PC-9 (cell line): ENCODE measurements at regions of chr17 and their contacts with region 1.

Region 1: GRCh38 chr17:58189436-58190146 is 2.9 kb upstream of the EPX start:
- DNase-seq: peak; percentile 63 to 67
- H3K4me3 ChIP-seq: no peak overlapping the region
- H3K27ac ChIP-seq: no peak overlapping the region
- H3K4me1 ChIP-seq: no peaks in the 10 kb centered on the region
- H3K27me3 ChIP-seq: peaks cover 87% of the 10 kb centered on the region
- CTCF ChIP-seq: no peak

Region 2: GRCh38 chr17:58172369-58173071 is 17.1 kb before region 1 on chr17:
- CTCF ChIA-PET with region 1: no interaction called
- POLR2A ChIA-PET with region 1: interaction called, 11 read pairs
- intact Hi-C with region 1: no loop called
- DNase-seq: peak in 1 of 2 experiments; percentile 49
- H3K4me3 ChIP-seq: no peak overlapping the region
- H3K27ac ChIP-seq: no peak overlapping the region
- H3K4me1 ChIP-seq: no peaks in the 10 kb centered on the region
- H3K27me3 ChIP-seq: peaks cover 79% of the 10 kb centered on the region
- CTCF ChIP-seq: peak; percentile 74